B cell (primary cell): ENCODE measurements at regions of chr9 and their contacts with region 1.

Region 1: DNA sequence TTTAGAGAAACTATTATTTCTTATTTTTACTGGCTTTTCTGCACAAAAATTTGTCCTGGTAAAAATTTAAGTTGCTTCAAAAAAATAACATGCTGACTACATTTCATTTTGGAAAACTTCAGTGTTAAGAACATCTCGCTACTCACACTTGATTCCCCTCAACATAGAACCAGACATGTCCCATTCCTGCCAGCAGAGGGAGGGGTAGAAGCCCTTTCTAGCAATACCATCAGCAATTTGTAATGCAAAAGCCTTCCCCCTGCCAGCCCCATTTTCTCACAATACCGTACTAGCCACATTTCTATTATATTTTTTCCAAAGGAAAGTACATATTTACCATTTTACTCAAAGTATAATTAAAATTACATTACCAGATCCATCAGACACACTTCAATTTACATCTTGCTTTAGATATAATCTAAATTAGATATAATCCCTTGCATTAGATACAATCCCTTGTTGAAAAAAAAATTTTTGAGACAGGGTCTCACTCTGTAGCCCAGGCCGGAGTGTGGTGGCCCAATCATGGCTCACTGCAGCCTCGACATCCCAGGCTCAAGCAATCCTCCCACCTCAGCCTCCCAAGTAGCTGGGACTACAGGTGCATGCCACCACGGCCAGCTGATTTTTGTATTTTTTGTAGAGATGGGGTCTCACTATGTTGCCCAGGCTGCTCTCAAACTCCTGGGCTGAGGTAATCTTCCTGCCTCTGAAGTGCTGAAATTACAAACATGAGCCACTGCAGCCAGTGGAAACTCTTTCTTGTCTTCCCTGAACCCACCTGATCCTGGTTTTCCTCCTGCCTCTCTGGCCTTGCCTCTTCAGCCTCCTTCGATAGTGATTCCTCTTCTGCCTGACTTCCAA is 39.6 kb upstream of the IDNK start:
- DNase-seq: peak; percentile 44
- ATAC-seq: peak; percentile 31
- H3K4me3 ChIP-seq: no peak overlapping the region
- H3K4me3 Mint-ChIP-seq: no peak overlapping the region
- H3K27ac ChIP-seq: no peak overlapping the region
- H3K27ac Mint-ChIP-seq: no peak overlapping the region
- H3K4me1 ChIP-seq: no peaks in the 10 kb centered on the region
- H3K4me1 Mint-ChIP-seq: no peaks in the 10 kb centered on the region
- H3K27me3 ChIP-seq: no peaks in the 10 kb centered on the region
- H3K27me3 Mint-ChIP-seq: no peaks in the 10 kb centered on the region
- CTCF ChIP-seq: peak; percentile 76

Region 2: GRCh38 chr9:83523684-83524083 is 59.7 kb before region 1 on chr9:
- CTCF ChIA-PET with region 1: no interaction called
- POLR2A ChIA-PET with region 1: no interaction called
- intact Hi-C with region 1: loop called (anchors 2 kb)
- DNase-seq: no peak
- ATAC-seq: no peak
- H3K4me3 ChIP-seq: no peak overlapping the region
- H3K4me3 Mint-ChIP-seq: no peak overlapping the region
- H3K27ac ChIP-seq: no peak overlapping the region
- H3K27ac Mint-ChIP-seq: no peak overlapping the region
- H3K4me1 ChIP-seq: peaks cover 9 to 11% of the 10 kb centered on the region in 2 donors
- H3K4me1 Mint-ChIP-seq: peaks cover 10% of the 10 kb centered on the region
- H3K27me3 ChIP-seq: no peaks in the 10 kb centered on the region
- H3K27me3 Mint-ChIP-seq: peaks cover 3% of the 10 kb centered on the region
- CTCF ChIP-seq: no peak